Activated CD8-positive, alpha-beta T cell treated with anti-CD3 and anti-CD28 coated beads for 36 hours (primary cell): ENCODE measurements at regions of chr16 and their contacts with region 1.

Region 1: GRCh38 chr16:11535471-11535870 is 51.2 kb downstream of the LITAF start:
- DNase-seq: no peak
- ATAC-seq: no peak
- H3K4me3 Mint-ChIP-seq: no peak overlapping the region
- H3K27ac Mint-ChIP-seq: no peak overlapping the region
- H3K4me1 Mint-ChIP-seq: peaks cover 5% of the 10 kb centered on the region
- H3K27me3 Mint-ChIP-seq: no peaks in the 10 kb centered on the region
- CTCF ChIP-seq: no peak

Region 2: GRCh38 chr16:11407047-11407982 is 128.2 kb before region 1 on chr16:
- CTCF ChIA-PET with region 1: interaction called, 25 read pairs
- POLR2A ChIA-PET with region 1: interaction called, 3 read pairs
- intact Hi-C with region 1: no loop called
- DNase-seq: peak; percentile 80
- ATAC-seq: peak; percentile 59
- H3K4me3 Mint-ChIP-seq: no peak overlapping the region
- H3K27ac Mint-ChIP-seq: no peak overlapping the region
- H3K4me1 Mint-ChIP-seq: no peaks in the 10 kb centered on the region
- H3K27me3 Mint-ChIP-seq: no peaks in the 10 kb centered on the region
- CTCF ChIP-seq: peak; percentile 85

Region 3: GRCh38 chr16:11554053-11554452 is 18.6 kb after region 1 on chr16:
- CTCF ChIA-PET with region 1: interaction called, 13 read pairs
- POLR2A ChIA-PET with region 1: no interaction called
- intact Hi-C with region 1: no loop called
- DNase-seq: no peak
- ATAC-seq: no peak
- H3K4me3 Mint-ChIP-seq: no peak overlapping the region
- H3K27ac Mint-ChIP-seq: peak overlapping the region; percentile 34
- H3K4me1 Mint-ChIP-seq: peaks cover 26% of the 10 kb centered on the region
- H3K27me3 Mint-ChIP-seq: no peaks in the 10 kb centered on the region
- CTCF ChIP-seq: no peak

Region 4: DNA sequence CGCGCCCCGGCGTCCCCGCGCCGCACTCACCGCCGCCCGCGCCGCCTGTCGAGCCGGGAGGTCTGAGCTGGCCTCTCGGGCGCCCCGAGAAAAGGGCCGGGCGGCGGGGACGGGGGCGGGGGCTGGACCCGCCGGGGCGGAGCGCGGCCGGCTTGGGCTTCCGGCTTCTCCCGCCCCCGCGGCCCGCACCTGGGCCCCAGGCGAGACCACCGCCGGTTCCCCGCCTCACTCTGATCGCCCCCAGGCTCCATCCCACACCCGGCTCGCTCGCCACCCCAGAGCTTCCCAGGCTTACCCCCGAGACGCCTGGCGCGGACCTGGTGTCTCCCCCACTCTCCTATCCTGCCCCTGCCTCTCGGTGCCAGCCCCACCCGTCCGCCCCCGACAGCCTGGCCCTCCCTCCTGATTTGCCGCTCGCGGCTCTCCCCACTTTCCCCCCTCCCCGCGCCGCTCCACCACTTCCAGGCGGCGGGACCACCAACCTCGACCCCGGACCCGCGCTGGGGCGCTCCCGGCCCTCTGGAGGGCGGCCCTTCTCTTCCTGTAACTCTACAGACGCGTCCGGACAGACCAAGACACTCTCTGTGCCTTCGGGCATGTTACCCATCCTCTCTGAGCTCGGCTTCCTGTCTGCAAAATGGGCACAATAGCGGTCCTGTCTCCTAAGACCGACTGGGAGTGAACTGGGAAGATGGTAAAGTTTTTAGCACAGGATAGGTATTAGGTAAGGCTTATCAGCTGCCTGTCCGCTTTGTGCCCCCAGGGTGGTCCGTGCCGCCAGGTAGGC is 51.6 kb after region 1 on chr16 and contains the start of gene LITAF:
- CTCF ChIA-PET with region 1: interaction called, 28 read pairs
- POLR2A ChIA-PET with region 1: interaction called, 4 read pairs
- intact Hi-C with region 1: no loop called
- DNase-seq: peak; percentile 68
- ATAC-seq: peak; percentile 65
- H3K4me3 Mint-ChIP-seq: peak within 1 kb of the TSS; percentile 86
- H3K27ac Mint-ChIP-seq: peak within 1 kb of the TSS; percentile 96
- H3K4me1 Mint-ChIP-seq: peaks cover 29% of the 10 kb centered on the region
- H3K27me3 Mint-ChIP-seq: no peaks in the 10 kb centered on the region
- CTCF ChIP-seq: no peak
- total RNA-seq, gene LITAF: 108 to 110 TPM

Region 5: DNA sequence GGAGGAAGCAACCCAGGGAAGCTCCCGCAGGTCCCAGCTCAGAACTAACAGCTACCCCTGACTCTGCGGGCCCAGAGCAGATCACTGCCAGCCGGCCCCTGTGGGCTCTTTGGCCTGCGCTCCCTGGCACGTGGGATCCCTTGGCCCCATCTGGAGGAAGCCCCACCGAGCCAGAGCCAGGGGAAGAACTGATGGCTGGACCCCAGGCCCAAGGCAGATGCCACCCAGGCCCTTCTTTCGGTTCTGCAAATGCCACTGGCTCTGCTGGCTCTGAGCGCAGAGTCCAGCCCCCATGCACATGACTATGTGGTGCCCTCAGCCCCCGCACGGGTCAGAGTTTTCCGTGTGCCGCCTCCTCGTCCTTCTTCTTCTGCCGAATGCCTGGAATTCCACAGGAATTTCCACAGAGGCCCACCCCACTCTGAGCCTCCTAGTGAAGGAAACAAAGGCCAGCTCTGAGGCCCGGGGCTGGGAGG is 97.0 kb after region 1 on chr16:
- CTCF ChIA-PET with region 1: interaction called, 12 read pairs
- POLR2A ChIA-PET with region 1: no interaction called
- intact Hi-C with region 1: no loop called
- DNase-seq: no peak
- ATAC-seq: no peak
- H3K4me3 Mint-ChIP-seq: no peak overlapping the region
- H3K27ac Mint-ChIP-seq: no peak overlapping the region
- H3K4me1 Mint-ChIP-seq: peaks cover 30% of the 10 kb centered on the region
- H3K27me3 Mint-ChIP-seq: no peaks in the 10 kb centered on the region
- CTCF ChIP-seq: no peak

Region 6: GRCh38 chr16:11658894-11659708 is 123.6 kb after region 1 on chr16:
- CTCF ChIA-PET with region 1: interaction called, 12 read pairs
- POLR2A ChIA-PET with region 1: interaction called, 3 read pairs
- intact Hi-C with region 1: no loop called
- DNase-seq: no peak
- ATAC-seq: no peak
- H3K4me3 Mint-ChIP-seq: no peak overlapping the region
- H3K27ac Mint-ChIP-seq: no peak overlapping the region
- H3K4me1 Mint-ChIP-seq: peaks cover 12% of the 10 kb centered on the region
- H3K27me3 Mint-ChIP-seq: no peaks in the 10 kb centered on the region
- CTCF ChIP-seq: no peak

Region 7: DNA sequence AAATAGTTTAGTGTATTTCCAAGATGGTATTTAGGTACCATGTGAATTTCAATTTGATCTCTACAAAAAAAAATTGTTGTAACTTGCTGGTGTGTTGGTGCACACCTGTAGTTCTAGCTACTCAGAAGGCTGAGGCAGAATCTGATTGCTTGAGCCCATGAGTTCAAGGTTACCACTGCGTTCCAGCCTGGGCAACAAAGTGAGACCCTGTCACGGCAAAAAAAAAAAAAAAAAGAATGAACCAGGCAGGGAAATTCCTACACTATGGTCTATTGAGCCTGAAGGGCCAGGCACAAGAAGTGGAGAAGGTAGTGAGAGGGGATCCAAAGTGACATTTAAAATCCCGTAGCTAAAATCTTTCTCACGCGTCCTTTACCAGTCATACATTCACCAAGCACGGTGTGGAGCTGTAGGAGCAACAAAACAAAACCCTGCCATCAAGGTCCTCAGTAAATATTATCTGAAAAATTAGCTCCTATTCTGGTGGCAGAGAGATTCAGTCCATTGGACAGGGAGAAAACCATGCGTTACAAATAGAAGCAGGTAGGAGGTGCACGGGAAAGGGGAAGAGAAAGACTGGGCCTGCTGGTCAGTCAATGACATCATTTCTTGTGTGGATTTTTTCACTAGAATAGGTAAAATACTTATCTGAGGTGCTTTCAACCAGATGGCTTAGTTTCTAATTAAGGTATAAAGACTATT is 179.9 kb after region 1 on chr16:
- CTCF ChIA-PET with region 1: interaction called, 71 read pairs
- POLR2A ChIA-PET with region 1: no interaction called
- intact Hi-C with region 1: loop called (anchors 10 kb)
- DNase-seq: no peak
- ATAC-seq: no peak
- H3K4me3 Mint-ChIP-seq: no peak overlapping the region
- H3K27ac Mint-ChIP-seq: no peak overlapping the region
- H3K4me1 Mint-ChIP-seq: peaks cover 18% of the 10 kb centered on the region
- H3K27me3 Mint-ChIP-seq: no peaks in the 10 kb centered on the region
- CTCF ChIP-seq: no peak